ENCODE measurements at regions of chr2 and their contacts with region 1.

Region 1: DNA sequence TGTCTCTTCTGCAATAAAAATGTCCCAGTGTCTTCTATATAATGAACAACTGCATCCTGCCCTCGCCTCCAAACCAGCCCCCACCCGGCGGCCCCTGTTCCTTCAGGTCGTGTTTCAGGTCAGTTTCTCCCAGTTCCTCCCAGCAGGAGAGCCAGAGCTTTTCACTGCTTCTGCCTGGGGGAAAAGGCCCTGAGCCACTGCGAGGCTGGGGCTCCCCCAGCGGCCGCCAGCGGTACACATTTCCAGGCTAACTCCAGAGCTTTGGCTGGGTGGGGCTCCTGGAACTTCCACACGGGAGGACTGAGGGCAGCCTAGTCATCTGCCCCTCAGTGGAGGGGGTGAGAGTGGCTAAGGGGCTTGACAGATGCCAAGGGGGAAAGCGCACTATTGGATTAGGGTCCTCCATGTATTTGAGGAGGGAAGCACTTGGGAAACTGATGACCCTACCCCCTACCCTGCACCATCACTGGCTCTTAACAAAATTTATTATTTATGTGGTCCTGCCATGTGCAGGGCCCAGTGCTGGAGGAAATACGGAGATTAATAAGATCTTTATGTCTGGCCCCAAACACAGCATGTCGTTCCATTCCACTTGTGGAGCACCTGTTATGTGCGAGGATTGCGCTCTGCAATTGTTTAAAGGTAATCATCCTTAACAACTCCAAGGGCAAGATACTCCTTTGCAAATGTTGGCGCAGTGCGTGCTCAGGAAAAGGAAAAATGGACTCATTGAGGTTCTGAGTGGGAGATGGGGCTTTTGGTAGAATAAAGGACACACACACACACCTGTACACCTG is 17.3 kb upstream of the CYS1 start:
- DNase-seq: peak in 4 of 9 experiments; percentile 32 to 55 (median 46)
- ATAC-seq: peak; percentile 62
- H3K4me3 ChIP-seq: no peak overlapping the region
- H3K4me3 Mint-ChIP-seq: no peak overlapping the region
- H3K27ac ChIP-seq: no peak overlapping the region
- H3K27ac Mint-ChIP-seq: no peak overlapping the region
- H3K4me1 ChIP-seq: no peaks in the 10 kb centered on the region
- H3K4me1 Mint-ChIP-seq: no peaks in the 10 kb centered on the region
- H3K27me3 ChIP-seq: peaks cover 0 to 11% of the 10 kb centered on the region in 2 experiments
- H3K27me3 Mint-ChIP-seq: peaks cover 32% of the 10 kb centered on the region
- CTCF ChIP-seq: peak; percentile 67

Region 2: GRCh38 chr2:10079234-10079869 is 18.2 kb before region 1 on chr2:
- CTCF ChIA-PET with region 1: interaction called, 89 read pairs
- POLR2A ChIA-PET with region 1: no interaction called
- intact Hi-C with region 1: no loop called
- DNase-seq: peak in 3 of 9 experiments; percentile 12 to 40 (median 31)
- ATAC-seq: peak; percentile 28
- H3K4me3 ChIP-seq: peak overlapping the region in 1 of 2 experiments; percentile 1
- H3K4me3 Mint-ChIP-seq: peak overlapping the region; percentile 84
- H3K27ac ChIP-seq: no peak overlapping the region
- H3K27ac Mint-ChIP-seq: no peak overlapping the region
- H3K4me1 ChIP-seq: peaks cover 22% of the 10 kb centered on the region
- H3K4me1 Mint-ChIP-seq: peaks cover 9% of the 10 kb centered on the region
- H3K27me3 ChIP-seq: peaks cover 21 to 34% of the 10 kb centered on the region in 2 experiments
- H3K27me3 Mint-ChIP-seq: peaks cover 69% of the 10 kb centered on the region
- CTCF ChIP-seq: no peak

Region 3: GRCh38 chr2:10454505-10454904 is 357.0 kb after region 1 on chr2:
- CTCF ChIA-PET with region 1: no interaction called
- POLR2A ChIA-PET with region 1: no interaction called
- intact Hi-C with region 1: no loop called
- DNase-seq: no peak
- ATAC-seq: no peak
- H3K4me3 ChIP-seq: no peak overlapping the region
- H3K4me3 Mint-ChIP-seq: no peak overlapping the region
- H3K27ac ChIP-seq: no peak overlapping the region
- H3K27ac Mint-ChIP-seq: no peak overlapping the region
- H3K4me1 ChIP-seq: peaks cover 3% of the 10 kb centered on the region
- H3K4me1 Mint-ChIP-seq: peaks cover 13% of the 10 kb centered on the region
- H3K27me3 ChIP-seq: no peaks in the 10 kb centered on the region
- H3K27me3 Mint-ChIP-seq: no peaks in the 10 kb centered on the region
- CTCF ChIP-seq: no peak